ENCODE measurements at regions of chr2 and their contacts with region 1.

Region 1: GRCh38 chr2:1742681-1743395 is 1.5 kb downstream of the PXDN start:
- DNase-seq: peak; percentile 88 to 90
- H3K4me3 ChIP-seq: peak overlapping the region; percentile 52 to 94
- H3K27ac ChIP-seq: peak overlapping the region; percentile 98 to 99
- H3K4me1 ChIP-seq: peaks cover 9 to 16% of the 10 kb centered on the region in 2 donors
- H3K27me3 ChIP-seq: no peaks in the 10 kb centered on the region
- CTCF ChIP-seq: peak; percentile 71 to 78 (median 74)
- POLR2A ChIP-seq: peak in 1 of 2 donors; percentile 16

Region 2: DNA sequence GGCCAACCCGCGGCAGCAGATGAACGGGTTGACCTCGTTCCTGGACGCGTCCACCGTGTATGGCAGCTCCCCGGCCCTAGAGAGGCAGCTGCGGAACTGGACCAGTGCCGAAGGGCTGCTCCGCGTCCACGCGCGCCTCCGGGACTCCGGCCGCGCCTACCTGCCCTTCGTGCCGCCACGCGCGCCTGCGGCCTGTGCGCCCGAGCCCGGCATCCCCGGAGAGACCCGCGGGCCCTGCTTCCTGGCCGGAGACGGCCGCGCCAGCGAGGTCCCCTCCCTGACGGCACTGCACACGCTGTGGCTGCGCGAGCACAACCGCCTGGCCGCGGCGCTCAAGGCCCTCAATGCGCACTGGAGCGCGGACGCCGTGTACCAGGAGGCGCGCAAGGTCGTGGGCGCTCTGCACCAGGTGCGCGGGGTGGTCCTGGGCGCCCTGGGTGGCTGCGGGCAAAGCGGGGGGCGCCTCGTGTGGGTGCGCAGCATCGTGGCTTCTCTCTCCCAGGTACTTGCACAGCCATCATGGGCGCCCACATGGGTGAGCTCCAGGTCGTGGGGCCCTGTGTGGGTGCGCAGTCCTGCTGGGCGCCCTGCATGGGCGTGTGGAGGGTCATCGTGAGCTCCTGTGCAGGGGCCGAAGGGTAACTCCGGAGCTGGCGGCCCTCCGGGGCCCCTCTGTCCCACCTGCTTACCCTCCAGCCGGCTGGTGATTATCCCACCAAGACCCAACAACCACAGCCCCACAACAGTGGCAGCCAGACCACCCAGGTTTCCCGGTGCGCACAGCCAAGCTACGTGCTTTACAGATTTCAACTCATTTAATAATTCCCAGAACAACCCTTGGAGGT is 265.4 kb before region 1 on chr2:
- intact Hi-C with region 1: no loop called
- DNase-seq: no peak
- H3K4me3 ChIP-seq: no peak overlapping the region
- H3K27ac ChIP-seq: no peak overlapping the region
- H3K4me1 ChIP-seq: no peaks in the 10 kb centered on the region
- H3K27me3 ChIP-seq: no peaks in the 10 kb centered on the region
- CTCF ChIP-seq: no peak
- POLR2A ChIP-seq: no peak

Region 3: GRCh38 chr2:1591978-1592907 is 150.6 kb before region 1 on chr2:
- intact Hi-C with region 1: loop called (anchors 10 kb)
- DNase-seq: peak; percentile 79 to 85
- H3K4me3 ChIP-seq: peak overlapping the region in 1 of 2 donors; percentile 7
- H3K27ac ChIP-seq: peak overlapping the region; percentile 52 to 68
- H3K4me1 ChIP-seq: no peaks in the 10 kb centered on the region
- H3K27me3 ChIP-seq: no peaks in the 10 kb centered on the region
- CTCF ChIP-seq: peak; percentile 75 to 88 (median 80)
- POLR2A ChIP-seq: no peak

Region 4: GRCh38 chr2:1675633-1676032 is 67.2 kb before region 1 on chr2:
- intact Hi-C with region 1: loop called (anchors 10 kb)
- DNase-seq: peak; percentile 77 to 88
- H3K4me3 ChIP-seq: no peak overlapping the region
- H3K27ac ChIP-seq: peak overlapping the region; percentile 87 to 88
- H3K4me1 ChIP-seq: peaks cover 0 to 8% of the 10 kb centered on the region in 2 donors
- H3K27me3 ChIP-seq: no peaks in the 10 kb centered on the region
- CTCF ChIP-seq: peak; percentile 35 to 68 (median 55)
- POLR2A ChIP-seq: no peak

Region 5: GRCh38 chr2:1817256-1818051 is 74.6 kb after region 1 on chr2:
- intact Hi-C with region 1: loop called (anchors 10 kb)
- DNase-seq: peak; percentile 94 to 96
- H3K4me3 ChIP-seq: no peak overlapping the region
- H3K27ac ChIP-seq: peak overlapping the region; percentile 87 to 90
- H3K4me1 ChIP-seq: peaks cover 6 to 7% of the 10 kb centered on the region in 2 donors
- H3K27me3 ChIP-seq: no peaks in the 10 kb centered on the region
- CTCF ChIP-seq: peak; percentile 91 to 99 (median 95)
- POLR2A ChIP-seq: no peak